ENCODE measurements at regions of chr5 and their contacts with region 1.

Region 1: DNA sequence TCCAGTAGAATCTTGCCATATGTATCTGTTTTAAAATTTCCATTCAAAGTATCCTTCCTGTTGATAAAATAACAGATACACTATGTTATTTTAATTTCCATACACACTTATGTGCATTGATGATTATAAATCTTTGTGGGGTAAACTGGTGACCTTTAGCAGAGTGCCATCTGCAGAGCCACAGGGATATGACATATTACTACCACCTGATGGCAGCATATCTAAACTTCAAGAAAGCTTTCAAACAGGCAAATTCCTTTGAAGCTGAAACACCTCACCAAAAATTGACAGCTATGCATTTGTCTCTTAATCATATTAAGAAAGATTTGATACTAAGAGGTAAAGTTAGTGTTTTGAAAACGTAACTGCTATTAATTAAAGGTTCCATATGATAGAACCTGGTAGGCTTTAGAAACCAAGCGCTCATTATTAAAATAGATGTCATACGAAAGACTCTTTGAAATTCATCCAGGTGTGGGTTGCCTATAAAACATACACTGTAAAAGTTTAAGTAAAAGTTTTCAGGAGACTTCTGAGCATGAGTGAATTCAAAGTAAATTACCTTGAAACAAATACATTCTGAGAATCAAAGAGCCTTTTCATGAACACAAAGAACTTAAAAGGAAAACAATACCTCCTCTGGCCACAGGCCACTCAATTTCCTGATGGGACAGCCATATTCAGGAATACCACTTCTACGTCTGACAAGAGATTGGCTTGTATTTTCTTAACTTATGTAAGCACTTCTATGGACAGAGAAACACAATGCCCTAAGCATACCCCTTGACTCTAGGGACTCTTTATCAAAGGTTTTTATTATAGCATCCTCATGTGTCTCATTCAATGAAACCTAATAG is 93.3 kb downstream of the KIAA0825 start:
- DNase-seq: no peak
- H3K4me3 ChIP-seq: no peak overlapping the region
- H3K27ac ChIP-seq: no peak overlapping the region
- H3K4me1 ChIP-seq: no peaks in the 10 kb centered on the region
- H3K27me3 ChIP-seq: no peaks in the 10 kb centered on the region
- CTCF ChIP-seq: peak in 2 of 3 experiments; percentile 51 to 63; a peak in 2 of 4 replicates
- EP300 ChIP-seq: no peak
- POLR2A ChIP-seq: no peak
- RAD21 ChIP-seq: peak; percentile 77 to 81

Region 2: GRCh38 chr5:94218374-94218773 is 306.7 kb before region 1 on chr5:
- CTCF ChIA-PET with region 1: no interaction called
- POLR2A ChIA-PET with region 1: no interaction called
- DNase-seq: no peak
- H3K4me3 ChIP-seq: no peak overlapping the region
- H3K27ac ChIP-seq: no peak overlapping the region
- H3K4me1 ChIP-seq: peaks cover 0 to 3% (median 0%) of the 10 kb centered on the region in 4 experiments; a peak in 2 of 7 replicates
- H3K27me3 ChIP-seq: no peaks in the 10 kb centered on the region
- CTCF ChIP-seq: no peak
- EP300 ChIP-seq: no peak
- POLR2A ChIP-seq: no peak
- RAD21 ChIP-seq: no peak

Region 3: DNA sequence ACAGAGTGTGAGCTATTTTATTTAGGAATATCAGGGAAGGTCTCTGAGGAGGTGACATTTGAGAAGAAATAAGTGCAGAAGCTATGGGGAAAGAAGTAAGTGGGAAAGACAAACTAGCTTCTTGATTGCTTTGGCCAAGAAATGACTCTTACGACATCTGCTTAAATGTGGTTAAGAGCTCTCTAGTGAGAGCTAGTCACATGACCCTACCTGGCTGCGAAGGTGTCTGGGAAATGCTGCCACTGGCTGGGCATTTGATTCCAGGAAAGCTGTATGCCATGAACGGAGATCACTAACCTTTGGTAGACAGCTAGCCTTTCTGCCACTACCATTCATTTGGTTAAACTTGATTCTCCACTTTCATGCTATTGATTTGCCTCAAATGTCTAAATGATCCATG is 13.2 kb after region 1 on chr5:
- CTCF ChIA-PET with region 1: interaction called, 13 read pairs
- POLR2A ChIA-PET with region 1: no interaction called
- DNase-seq: no peak
- H3K4me3 ChIP-seq: no peak overlapping the region
- H3K27ac ChIP-seq: no peak overlapping the region
- H3K4me1 ChIP-seq: no peaks in the 10 kb centered on the region
- H3K27me3 ChIP-seq: no peaks in the 10 kb centered on the region
- CTCF ChIP-seq: no peak
- EP300 ChIP-seq: no peak
- POLR2A ChIP-seq: no peak
- RAD21 ChIP-seq: no peak

Region 4: GRCh38 chr5:94740286-94740685 is 215.2 kb after region 1 on chr5:
- CTCF ChIA-PET with region 1: interaction called, 11 read pairs
- POLR2A ChIA-PET with region 1: no interaction called
- DNase-seq: no peak
- H3K4me3 ChIP-seq: no peak overlapping the region
- H3K27ac ChIP-seq: no peak overlapping the region
- H3K4me1 ChIP-seq: peaks cover 0 to 4% (median 2%) of the 10 kb centered on the region in 4 experiments; a peak in 2 of 7 replicates
- H3K27me3 ChIP-seq: no peaks in the 10 kb centered on the region
- CTCF ChIP-seq: no peak
- EP300 ChIP-seq: no peak
- POLR2A ChIP-seq: no peak
- RAD21 ChIP-seq: no peak